ENCODE measurements at regions of chr19 and their contacts with region 1.

Region 1: DNA sequence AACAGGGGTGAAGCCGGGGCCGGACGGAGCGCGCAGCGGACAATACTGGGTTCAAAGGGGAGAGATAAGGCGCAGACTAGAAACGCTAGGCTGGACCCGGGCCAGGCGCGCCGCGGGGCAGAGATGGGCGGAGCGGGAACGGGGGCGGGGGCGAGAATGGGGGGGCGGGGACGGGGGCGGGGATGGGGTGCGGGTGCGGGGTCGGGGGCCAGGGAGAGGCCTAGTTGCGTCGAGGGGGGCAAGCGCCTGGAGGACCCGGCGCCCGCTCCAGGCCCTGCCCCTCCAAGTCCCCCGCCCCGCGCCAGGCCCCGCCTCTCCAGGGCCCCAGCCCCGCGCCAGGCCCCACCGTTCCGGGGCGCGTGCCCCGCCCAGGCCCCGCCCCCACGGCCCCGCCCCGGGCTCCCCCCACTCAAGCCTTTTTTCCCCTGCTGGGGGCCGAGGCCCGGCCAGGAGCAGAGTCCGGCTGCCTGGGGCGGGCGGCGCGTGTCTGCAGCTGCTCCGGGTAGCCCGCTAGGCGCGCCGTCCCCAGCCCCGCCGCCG is at the start of gene CERS4:
- DNase-seq: peak; percentile 89
- ATAC-seq: peak; percentile 83
- H3K4me3 Mint-ChIP-seq: peak within 1 kb of the TSS; percentile 83
- H3K27ac Mint-ChIP-seq: peak within 1 kb of the TSS; percentile 94
- H3K4me1 Mint-ChIP-seq: peaks cover 24% of the 10 kb centered on the region
- H3K27me3 Mint-ChIP-seq: no peaks in the 10 kb centered on the region
- total RNA-seq, gene CERS4: 21.2 to 21.8 TPM

Region 2: DNA sequence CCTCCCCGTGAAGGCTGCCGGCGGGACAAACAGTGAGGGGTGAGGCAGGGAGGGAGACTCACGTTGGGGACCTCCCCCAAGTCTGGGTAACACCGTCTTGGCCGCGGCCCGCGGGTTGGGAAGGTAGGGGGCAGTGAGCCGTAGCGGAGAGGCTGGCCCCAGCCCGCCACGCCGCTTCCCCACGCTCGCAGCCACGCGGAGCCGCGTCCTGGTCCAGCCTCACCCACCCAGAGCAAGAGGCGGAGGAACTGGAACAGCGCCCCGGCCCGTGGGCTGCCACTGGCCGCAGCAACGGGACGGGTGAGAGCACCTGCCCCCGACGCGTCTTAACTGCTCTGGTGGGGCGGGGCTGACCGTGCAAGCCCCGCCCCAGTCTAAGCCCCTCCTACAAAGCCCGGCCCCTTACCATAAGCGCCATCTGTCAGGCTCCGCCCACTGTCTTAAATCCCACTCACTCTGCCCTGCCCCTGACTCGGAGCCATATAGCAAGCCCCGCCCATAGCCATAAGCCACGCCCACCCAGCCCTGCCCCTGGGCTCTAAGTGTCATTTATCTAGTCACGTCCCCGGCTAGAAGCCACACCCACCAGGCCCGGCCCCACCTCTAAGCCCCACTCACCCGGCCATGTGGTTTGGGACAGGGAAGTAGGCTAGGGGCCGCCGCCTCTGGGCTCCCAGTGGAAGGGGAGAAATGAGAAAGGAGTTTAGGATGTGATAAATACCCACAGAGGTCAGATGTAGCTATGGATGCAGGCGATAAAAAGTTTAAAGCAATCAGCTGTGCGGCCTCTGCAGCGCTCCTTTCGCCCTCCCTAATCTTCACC is 158.5 kb before region 1 on chr19:
- CTCF ChIA-PET with region 1: no interaction called
- POLR2A ChIA-PET with region 1: no interaction called
- intact Hi-C with region 1: loop called in 1 of 2 experiments (anchors 1 kb)
- DNase-seq: peak; percentile 98
- ATAC-seq: peak; percentile 99
- H3K4me3 Mint-ChIP-seq: peak overlapping the region; percentile 36
- H3K27ac Mint-ChIP-seq: no peak overlapping the region
- H3K4me1 Mint-ChIP-seq: peaks cover 11% of the 10 kb centered on the region
- H3K27me3 Mint-ChIP-seq: peaks cover 4% of the 10 kb centered on the region

Region 3: DNA sequence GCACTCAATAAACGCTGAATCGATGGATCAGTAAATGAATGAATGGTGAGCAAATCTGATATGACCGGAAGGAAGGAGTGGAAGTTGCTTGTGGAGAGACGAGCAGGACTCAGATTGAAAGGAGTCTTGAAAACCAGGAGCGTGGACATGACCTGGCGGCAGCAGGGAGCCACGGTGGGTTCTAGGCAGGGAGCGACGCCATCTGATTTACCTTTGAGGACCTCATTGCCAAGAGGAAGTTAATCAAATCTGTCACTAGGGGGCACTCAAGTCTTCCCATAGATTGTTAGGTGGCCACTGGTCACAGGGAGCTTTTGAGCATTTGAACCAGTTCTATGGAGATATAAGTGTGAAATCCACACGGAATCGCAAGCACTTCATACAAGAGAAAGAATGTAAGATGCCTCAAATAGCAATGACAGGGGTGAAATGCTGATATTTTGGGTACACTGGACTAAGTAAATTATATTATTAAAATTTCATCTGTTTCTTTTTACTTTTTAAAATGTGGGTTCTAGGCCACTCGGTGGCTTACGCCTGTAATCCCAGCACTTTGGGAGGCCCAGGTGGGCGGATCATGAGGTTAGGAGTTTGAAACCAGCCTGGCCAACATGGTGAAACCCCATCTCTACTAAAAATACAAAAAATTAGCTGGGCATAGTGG is 50.4 kb before region 1 on chr19:
- CTCF ChIA-PET with region 1: interaction called, 3 read pairs
- POLR2A ChIA-PET with region 1: no interaction called
- intact Hi-C with region 1: loop called in 1 of 2 experiments (anchors 10 kb)
- DNase-seq: peak; percentile 59
- ATAC-seq: peak; percentile 87
- H3K4me3 Mint-ChIP-seq: no peak overlapping the region
- H3K27ac Mint-ChIP-seq: no peak overlapping the region
- H3K4me1 Mint-ChIP-seq: peaks cover 4% of the 10 kb centered on the region
- H3K27me3 Mint-ChIP-seq: peaks cover 9% of the 10 kb centered on the region

Region 4: DNA sequence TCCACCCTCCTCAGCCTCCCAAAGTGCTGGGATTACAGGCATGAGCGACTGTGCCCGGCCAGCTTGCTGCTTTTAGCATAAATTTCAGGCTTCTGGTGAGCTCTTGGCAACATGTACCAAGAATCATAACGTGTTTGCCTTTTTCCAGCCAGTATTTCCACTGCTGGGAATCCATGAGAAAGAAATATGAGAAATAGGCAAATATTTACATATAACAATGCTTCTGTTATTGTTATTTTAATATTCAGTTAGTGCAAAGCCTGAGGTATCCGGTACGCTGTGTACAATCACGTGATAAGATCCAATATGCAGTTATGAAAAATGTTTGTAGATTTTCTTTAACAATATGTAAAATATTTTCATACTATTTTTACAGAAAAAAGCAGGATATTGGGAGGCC is 28.9 kb before region 1 on chr19:
- CTCF ChIA-PET with region 1: interaction called, 3 read pairs
- POLR2A ChIA-PET with region 1: no interaction called
- intact Hi-C with region 1: loop called in 1 of 2 experiments (anchors 2 kb)
- DNase-seq: no peak
- ATAC-seq: no peak
- H3K4me3 Mint-ChIP-seq: no peak overlapping the region
- H3K27ac Mint-ChIP-seq: no peak overlapping the region
- H3K4me1 Mint-ChIP-seq: peaks cover 9% of the 10 kb centered on the region
- H3K27me3 Mint-ChIP-seq: no peaks in the 10 kb centered on the region

Region 5: DNA sequence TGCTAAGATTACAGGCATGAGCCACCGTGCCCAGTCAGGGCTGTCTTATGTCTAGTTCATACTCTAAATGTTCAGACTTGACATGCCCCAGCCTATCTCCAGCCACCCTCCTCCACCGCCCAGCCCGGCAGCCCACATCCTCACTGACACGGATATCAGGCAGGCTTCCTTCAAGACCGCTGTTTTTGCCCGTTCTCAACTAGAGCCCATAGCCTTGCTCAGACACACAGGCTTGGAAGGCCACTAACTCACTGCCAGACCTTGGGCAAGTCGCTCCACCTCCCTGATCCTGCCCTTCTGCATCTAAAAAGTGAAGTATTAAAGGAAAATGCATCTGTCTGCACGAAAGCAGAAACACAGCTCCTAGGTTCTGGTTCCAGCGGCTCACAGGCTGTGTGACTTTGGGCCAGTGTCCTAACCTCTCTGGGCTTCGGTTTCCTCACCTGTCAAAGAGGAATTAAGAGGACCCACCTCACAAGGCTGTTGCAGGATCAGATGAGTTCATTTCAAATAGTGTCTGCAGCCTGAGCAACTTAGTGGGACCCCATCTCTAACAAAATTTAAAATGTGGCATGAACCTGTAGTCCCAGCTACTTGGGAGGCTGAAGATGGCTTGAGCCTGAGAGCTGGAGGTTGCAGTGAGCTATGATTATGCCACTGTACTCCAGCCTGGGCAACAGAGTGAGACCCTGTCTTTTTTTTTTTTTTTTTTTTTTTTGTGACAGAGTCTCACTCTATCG is 14.3 kb before region 1 on chr19:
- CTCF ChIA-PET with region 1: interaction called, 3 read pairs
- POLR2A ChIA-PET with region 1: interaction called, 6 read pairs
- intact Hi-C with region 1: loop called in 1 of 2 experiments (anchors 1 kb)
- DNase-seq: peak; percentile 63
- ATAC-seq: peak; percentile 41
- H3K4me3 Mint-ChIP-seq: peak overlapping the region; percentile 46
- H3K27ac Mint-ChIP-seq: peak overlapping the region; percentile 88
- H3K4me1 Mint-ChIP-seq: peaks cover 44% of the 10 kb centered on the region
- H3K27me3 Mint-ChIP-seq: no peaks in the 10 kb centered on the region

Region 6: DNA sequence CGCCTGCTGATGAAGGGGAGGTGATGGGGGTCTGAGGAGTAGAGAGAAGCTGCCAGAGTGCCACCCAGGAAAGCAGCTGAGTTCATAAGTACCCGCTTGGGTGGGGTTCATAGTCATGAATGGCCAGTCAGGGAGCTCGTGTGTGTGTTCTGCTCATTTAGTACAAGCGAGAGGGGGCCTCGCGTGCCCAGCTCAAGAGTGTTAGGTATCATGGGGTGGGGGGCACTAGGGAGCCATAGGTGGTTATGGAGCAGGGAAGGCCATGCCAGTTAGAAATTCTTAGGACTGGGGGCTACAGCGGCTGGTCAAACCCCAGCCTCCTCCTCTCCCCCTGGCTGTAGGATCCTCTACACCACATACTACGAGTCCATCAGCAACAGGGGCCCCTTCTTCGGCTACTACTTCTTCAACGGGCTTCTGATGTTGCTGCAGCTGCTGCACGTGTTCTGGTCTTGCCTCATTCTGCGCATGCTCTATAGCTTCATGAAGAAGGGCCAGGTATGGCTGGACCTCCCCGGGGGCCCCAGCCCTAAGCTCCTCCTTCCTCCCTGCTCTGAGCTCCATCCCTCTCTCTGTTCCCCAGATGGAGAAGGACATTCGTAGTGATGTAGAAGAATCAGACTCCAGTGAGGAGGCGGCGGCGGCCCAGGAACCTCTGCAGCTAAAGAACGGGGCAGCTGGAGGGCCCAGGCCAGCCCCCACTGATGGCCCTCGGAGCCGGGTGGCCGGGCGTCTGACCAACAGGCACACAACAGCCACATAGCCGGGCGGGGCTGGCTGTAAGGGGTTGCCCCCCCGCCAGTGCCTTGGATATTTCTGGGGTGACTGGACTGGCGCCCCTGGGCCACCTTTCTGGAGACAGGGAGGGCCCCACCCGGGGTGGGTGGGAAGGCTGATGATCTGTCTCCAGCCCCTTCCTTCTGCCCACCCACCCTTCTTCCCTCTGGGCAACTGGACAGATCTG is 52.6 kb after region 1 on chr19:
- CTCF ChIA-PET with region 1: no interaction called
- POLR2A ChIA-PET with region 1: no interaction called
- intact Hi-C with region 1: no loop called
- DNase-seq: no peak
- ATAC-seq: no peak
- H3K4me3 Mint-ChIP-seq: no peak overlapping the region
- H3K27ac Mint-ChIP-seq: no peak overlapping the region
- H3K4me1 Mint-ChIP-seq: peaks cover 5% of the 10 kb centered on the region
- H3K27me3 Mint-ChIP-seq: no peaks in the 10 kb centered on the region

Region 7: GRCh38 chr19:8592231-8593009 is 383.4 kb after region 1 on chr19:
- CTCF ChIA-PET with region 1: no interaction called
- POLR2A ChIA-PET with region 1: no interaction called
- intact Hi-C with region 1: loop called in 1 of 2 experiments (anchors 1 kb)
- DNase-seq: peak; percentile 99
- ATAC-seq: peak; percentile 94
- H3K4me3 Mint-ChIP-seq: peak overlapping the region; percentile 70
- H3K27ac Mint-ChIP-seq: no peak overlapping the region
- H3K4me1 Mint-ChIP-seq: peaks cover 15% of the 10 kb centered on the region
- H3K27me3 Mint-ChIP-seq: no peaks in the 10 kb centered on the region